G401 (cell line): ENCODE measurements at regions of chr6 and their contacts with region 1.

Region 1: DNA sequence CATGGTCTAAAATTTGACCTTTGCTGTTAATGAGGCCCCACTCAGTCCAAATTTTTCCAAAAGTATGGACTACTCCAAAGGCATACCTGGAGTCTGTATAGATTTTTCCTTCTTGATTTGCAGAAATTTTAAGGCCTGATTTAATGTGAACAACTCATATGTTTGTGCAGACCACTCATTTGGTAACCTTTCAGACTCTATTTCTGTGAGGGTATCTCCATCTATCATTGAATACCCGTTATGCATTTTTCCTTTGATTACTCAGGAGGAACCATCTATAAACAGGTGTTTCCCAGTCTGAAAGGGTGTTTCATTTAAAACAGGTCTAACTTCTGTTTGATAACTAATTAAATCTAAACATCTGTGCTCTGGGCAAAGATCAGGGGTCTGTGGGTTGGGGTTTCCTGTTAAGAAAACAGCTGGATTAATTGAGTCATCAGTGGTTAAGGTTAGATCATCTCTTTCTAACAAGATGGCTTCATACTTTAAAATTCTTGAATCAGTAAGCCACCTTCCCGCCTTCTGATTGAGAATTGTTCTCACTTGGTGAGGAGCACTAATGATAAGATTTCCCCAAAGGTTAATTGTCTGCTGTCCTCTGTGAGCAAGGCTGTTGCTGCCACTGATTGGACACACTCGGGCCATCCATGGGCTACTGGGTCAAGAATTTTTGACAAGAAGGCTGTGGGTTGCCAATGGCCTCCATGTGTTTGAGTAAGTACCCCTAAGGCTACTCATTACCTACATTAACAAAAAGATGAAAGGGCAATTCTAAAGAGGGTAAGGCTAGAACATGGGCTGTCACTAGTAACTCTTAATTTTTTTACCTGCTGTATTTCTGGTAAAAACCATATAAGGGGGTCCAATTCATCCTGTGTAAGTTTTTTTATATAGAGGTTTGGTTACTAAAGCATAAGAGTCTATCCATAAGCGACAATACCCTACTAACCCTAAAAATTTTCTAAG is 24.1 kb downstream of the HLA-B start:
- DNase-seq: no peak

Region 2: GRCh38 chr6:31239854-31240253 is 93.1 kb before region 1 on chr6:
- in situ Hi-C with region 1: loop called (anchors 10 kb)
- DNase-seq: no peak

Region 3: DNA sequence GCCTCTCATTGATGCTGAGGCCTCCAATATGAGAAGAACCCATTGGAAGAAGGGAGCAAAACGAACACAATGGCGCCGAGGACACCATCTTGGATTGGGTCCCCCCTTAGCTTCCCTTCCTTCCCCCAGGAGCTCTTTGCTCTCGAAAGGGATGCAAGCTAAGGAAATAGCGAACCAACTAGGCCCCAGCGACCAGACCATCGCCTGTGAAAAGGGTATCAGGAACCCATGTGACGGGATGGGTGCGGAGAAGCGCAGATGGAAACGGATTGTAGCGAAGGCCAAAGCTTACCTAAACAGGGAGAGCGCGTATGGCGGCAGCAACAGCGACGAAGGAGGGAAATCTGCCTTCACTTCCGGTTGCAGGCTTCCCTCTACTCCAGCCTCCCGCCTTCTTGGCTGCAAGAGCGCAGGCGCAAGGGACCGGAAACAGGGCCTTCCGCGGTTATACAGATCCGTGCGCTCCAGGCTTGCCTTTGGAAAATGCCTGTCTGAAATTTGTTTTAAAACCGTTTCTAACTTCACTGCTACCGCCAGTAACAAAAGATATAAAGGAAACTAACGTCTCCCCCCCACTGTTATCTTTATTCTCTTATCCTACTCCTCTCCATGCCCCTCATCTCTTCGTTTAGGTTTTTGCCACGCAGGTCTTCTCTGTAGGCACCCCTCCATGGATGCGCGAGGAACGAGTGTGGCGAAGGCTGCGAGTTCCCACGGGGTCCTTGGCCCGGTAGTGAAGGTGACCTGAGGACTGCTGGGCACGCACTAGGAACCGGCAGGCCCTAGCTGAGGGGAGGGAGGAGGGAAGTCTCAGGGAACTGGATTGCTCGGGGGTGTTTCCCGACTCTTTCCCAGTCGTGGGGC is 209.0 kb after region 1 on chr6 and contains the start of gene DDX39B:
- in situ Hi-C with region 1: no loop called
- DNase-seq: peak; percentile 98
- total RNA-seq, gene DDX39B: 771 and 792 TPM in 2 replicates